Colonic mucosa (tissue), 4 donors: ENCODE measurements at regions of chr12 and their contacts with region 1.

Region 1: GRCh38 chr12:3777206-3777809 is 24.4 kb upstream of the CRACR2A start:
- DNase-seq: peak; percentile 40
- H3K4me3 ChIP-seq: no peak overlapping the region
- H3K27ac ChIP-seq: no peak overlapping the region
- H3K4me1 ChIP-seq: no peaks in the 10 kb centered on the region
- H3K27me3 ChIP-seq: no peaks in the 10 kb centered on the region
- CTCF ChIP-seq: peak; percentile 63

Region 2: GRCh38 chr12:3299929-3300832 is 477.1 kb before region 1 on chr12:
- intact Hi-C with region 1: loop called (anchors 10 kb)
- DNase-seq: peak; percentile 93
- H3K4me3 ChIP-seq: no peak overlapping the region
- H3K27ac ChIP-seq: peak overlapping the region; percentile 49
- H3K4me1 ChIP-seq: no peaks in the 10 kb centered on the region
- H3K27me3 ChIP-seq: no peaks in the 10 kb centered on the region
- CTCF ChIP-seq: peak; percentile 97

Region 3: DNA sequence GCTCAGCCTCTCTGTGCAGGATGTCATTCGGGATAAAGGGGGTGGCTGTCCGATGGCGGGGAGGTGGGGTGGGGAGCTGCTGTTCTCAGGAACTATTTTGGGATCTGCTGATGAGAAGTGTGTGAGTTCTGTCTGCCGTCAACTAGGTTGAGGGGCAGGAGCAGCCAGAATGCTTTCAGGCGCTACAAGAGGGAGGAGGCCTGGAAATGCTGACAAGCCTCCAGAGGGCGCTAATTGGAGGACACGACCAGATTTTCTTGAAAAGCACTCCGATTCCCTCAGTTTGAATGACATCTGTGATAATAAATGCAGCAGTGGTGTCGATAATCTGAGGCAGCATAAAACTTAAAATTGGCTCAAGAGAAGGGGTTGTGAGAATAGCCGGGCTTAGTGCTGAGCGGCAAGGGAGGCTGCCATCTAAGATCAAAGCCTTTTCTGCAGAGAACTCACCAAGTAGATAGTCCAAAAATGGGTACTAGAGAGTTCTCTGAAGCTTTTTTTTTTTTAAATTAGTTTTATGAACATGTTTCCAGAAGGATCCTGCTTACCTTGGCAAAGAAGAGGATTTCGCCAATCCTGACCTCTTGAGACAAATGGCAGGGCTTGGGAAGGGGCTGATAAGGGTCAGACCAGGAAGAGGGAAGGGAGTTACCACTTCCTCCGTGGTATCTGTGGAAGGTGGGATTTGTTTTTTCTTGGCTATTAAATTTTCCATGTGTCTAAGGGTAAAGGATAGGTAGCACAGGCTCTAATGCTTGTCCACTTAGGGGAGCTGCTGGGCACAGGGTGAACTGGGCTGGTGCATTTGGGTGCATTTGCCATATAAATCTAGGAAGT is 118.8 kb before region 1 on chr12:
- intact Hi-C with region 1: loop called (anchors 5 kb)
- DNase-seq: peak; percentile 57
- H3K4me3 ChIP-seq: no peak overlapping the region
- H3K27ac ChIP-seq: no peak overlapping the region
- H3K4me1 ChIP-seq: no peaks in the 10 kb centered on the region
- H3K27me3 ChIP-seq: no peaks in the 10 kb centered on the region
- CTCF ChIP-seq: no peak